Activated T-helper 1 cell treated with anti-CD3 and anti-CD28 coated beads, Interleukin-12 subunit alpha, Interleukin-12 subunit beta, Interleukin-2, Interleukin-4 antibody, amounts not matched to agents 30 ng/mL and 10 ng/mL and 1 ng/mL, durations not matched to agents 14 hours and 24 hours and 36 hours (primary cell): ENCODE measurements at regions of chr22 and their contacts with region 1.

Region 1: DNA sequence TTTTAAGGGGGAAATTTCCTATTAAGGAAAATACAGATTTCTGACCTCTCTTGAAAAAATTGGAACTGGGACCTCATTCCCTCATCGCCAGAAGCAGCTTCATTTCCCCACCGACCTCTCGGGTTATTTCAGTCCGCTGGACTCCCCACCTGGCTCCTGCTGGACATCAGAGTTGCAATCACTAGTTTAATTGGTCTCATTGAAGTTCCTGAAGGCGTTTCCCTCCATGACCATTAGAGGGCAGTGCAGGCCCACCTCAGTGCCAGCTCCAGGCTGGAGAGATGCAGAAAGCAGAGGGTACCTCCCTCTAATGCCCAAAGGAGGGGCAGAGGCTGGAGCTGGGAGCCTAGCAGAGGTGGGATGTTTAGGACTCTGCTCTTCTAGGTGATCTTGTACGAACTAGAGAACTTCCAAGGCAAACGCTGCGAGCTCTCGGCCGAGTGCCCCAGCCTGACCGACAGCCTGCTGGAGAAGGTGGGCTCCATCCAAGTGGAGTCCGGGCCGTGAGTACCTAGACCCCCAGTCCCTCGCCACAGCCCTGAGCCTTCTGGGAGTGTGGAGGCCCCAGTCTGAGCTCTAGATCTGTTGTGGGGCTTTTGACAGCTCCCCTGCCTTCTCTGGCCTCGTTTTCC is 2.7 kb downstream of the CRYBB3 start:
- DNase-seq: peak; percentile 24
- H3K4me3 Mint-ChIP-seq: no peak overlapping the region
- H3K27ac Mint-ChIP-seq: no peak overlapping the region
- H3K4me1 Mint-ChIP-seq: peaks cover 6% of the 10 kb centered on the region
- H3K27me3 Mint-ChIP-seq: no peaks in the 10 kb centered on the region

Region 2: DNA sequence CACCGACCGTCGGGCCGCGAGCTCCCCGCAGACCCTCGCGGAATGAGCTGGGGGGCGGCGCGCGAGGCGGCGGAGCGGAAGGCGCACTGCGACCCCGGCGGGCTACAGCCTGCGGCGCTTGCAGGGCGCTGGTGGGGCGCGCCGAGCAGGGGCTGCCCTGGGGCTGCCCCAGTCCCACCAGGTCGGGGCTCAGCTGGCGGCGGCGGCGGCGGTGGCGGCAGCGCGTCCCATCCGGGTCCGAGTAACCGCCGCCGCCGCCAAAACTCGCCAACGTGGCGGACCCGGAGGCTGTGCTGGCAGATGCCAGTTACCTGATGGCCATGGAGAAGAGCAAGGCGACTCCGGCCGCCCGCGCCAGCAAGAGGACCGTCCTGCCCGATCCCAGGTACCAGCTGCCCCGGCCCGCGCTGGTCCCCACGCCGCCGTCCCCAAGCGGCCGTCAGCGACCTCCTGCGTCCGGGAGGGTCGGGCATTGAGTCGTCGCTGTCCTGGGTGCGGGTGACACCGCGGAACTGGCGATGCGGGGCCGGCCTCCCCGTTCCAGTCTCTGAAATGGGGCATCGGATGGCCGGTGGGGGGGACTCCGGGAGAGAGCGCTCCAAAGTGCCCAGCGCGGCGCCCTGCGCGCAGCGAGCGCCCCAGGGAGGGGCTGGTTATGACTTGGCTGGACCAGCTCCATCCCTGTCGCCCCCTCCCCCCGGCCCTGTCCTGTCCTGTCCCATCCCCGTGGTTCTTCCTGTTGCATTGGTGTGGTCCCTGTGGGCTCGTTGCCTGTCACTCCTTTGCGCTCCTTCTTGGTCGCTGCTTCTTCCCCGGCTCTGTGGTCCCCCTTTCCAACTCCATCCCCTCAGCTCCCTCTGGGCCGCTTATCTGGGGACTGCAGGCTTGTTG is 80.5 kb after region 1 on chr22:
- intact Hi-C with region 1: no loop called
- DNase-seq: no peak
- H3K4me3 Mint-ChIP-seq: no peak overlapping the region
- H3K27ac Mint-ChIP-seq: no peak overlapping the region
- H3K4me1 Mint-ChIP-seq: no peaks in the 10 kb centered on the region
- H3K27me3 Mint-ChIP-seq: peaks cover 54% of the 10 kb centered on the region

Region 3: DNA sequence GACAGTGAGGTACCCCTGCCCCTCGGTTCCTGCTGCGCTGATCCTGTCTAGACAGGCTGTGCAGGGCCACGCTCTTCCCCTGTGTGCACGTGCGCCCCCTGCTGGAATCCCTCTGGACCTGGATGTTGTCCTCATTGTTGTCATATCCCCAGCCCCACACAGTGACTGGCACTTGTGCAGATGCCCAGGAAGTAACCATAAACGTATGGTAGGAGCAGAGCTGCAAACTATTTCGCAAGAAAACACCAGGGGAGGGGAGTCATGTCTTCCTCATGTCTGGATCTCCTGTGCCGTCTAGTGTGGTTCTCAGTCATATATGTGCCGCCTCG is 131.7 kb after region 1 on chr22:
- intact Hi-C with region 1: loop called (anchors 1 kb)
- DNase-seq: peak; percentile 27
- H3K4me3 Mint-ChIP-seq: no peak overlapping the region
- H3K27ac Mint-ChIP-seq: no peak overlapping the region
- H3K4me1 Mint-ChIP-seq: peaks cover 5% of the 10 kb centered on the region
- H3K27me3 Mint-ChIP-seq: peaks cover 1% of the 10 kb centered on the region